ENCODE measurements at regions of chr3 and their contacts with region 1.

Region 1: GRCh38 chr3:52536369-52537164 is at the start of gene UQCC5:
- DNase-seq: peak; percentile 94 to 98
- H3K4me3 ChIP-seq: peak within 1 kb of the TSS; percentile 99
- H3K27ac ChIP-seq: peak within 1 kb of the TSS; percentile 71
- H3K4me1 ChIP-seq: peaks cover 28% of the 10 kb centered on the region
- H3K27me3 ChIP-seq: no peaks in the 10 kb centered on the region
- CTCF ChIP-seq: no peak
- total RNA-seq, gene UQCC5: 13.3 and 16.5 TPM in 2 replicates

Region 2: GRCh38 chr3:52455283-52456168 is 81.0 kb before region 1 on chr3 and contains the start of gene NISCH:
- CTCF ChIA-PET with region 1: no interaction called
- POLR2A ChIA-PET with region 1: interaction called, 30 read pairs
- intact Hi-C with region 1: no loop called
- DNase-seq: peak in 1 of 2 experiments; percentile 92
- H3K4me3 ChIP-seq: peak within 1 kb of the TSS; percentile 81
- H3K27ac ChIP-seq: no peak within 1 kb of the TSS
- H3K4me1 ChIP-seq: peaks cover 27% of the 10 kb centered on the region
- H3K27me3 ChIP-seq: no peaks in the 10 kb centered on the region
- CTCF ChIP-seq: no peak
- total RNA-seq, gene NISCH: 66.1 and 68.0 TPM in 2 replicates

Region 3: DNA sequence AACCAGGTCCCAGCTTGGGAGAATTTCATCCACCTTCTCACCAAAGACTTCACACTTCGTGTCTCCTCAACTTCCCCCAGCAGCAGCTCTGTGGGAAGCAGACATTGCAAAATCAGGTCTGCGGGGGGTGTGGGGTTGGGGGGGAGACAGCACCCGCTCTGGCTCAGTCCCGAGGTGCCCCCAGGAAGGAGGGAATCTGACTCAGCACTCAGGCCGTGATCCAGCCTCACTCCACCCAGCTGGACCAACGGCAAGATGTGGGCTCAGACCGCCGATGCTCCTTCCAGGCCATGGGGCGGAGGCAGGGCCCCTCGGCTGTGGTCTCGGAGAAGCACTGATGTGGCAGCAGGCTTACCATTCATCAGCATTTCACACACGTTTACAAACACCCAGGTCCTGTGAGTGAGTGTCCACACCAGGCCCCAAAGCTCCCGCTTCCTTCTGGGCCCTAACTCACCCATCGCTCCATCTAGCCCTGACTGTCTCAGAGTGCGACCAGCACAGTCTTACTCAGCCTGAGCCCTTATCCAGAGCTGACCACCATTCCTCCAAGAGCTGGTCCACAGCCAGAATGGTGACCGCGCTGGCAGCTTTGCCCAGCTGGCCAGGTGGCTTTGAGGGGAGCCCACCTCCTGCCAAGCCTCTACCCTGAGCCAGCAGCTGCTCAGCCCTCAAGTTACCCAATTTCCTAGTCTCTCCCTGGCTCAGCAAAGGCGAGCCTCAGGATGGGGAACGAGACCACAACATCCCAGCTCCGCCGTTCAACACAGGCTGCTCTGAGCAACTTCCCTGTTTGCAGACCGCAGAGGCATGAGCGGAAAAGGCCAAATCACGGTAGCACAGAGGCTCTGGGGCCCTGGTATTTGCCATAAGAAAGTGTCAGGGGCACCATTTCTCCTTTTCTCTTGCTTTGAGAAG is 38.2 kb before region 1 on chr3:
- CTCF ChIA-PET with region 1: no interaction called
- POLR2A ChIA-PET with region 1: interaction called, 22 read pairs
- intact Hi-C with region 1: no loop called
- DNase-seq: no peak
- H3K4me3 ChIP-seq: no peak overlapping the region
- H3K27ac ChIP-seq: no peak overlapping the region
- H3K4me1 ChIP-seq: no peaks in the 10 kb centered on the region
- H3K27me3 ChIP-seq: no peaks in the 10 kb centered on the region
- CTCF ChIP-seq: no peak

Region 4: DNA sequence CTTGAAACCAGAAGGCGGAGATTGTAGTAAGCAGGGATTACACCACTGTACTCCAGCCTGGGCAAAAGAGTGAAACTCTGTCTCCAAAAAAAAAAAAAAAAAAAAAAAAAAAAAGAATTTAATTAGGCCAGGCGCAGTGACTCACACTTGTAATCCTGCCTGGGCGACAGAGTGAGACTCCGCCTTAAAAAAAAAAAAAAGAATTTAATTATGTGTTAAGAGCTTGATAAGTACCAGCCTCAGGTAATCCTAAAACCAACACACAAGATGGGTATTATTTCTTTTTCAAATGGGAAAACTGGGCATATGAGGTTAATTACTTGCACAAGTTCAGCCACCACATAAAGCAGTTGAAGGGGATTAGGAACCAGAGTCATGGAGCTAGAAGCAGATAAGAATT is 100.1 kb after region 1 on chr3:
- CTCF ChIA-PET with region 1: no interaction called
- POLR2A ChIA-PET with region 1: interaction called, 11 read pairs
- intact Hi-C with region 1: no loop called
- DNase-seq: peak; percentile 35 to 81
- H3K4me3 ChIP-seq: no peak overlapping the region
- H3K27ac ChIP-seq: peak overlapping the region; percentile 53; the same call in 1 of the 2 replicates
- H3K4me1 ChIP-seq: peaks cover 10% of the 10 kb centered on the region; the same call in 1 of the 2 replicates
- H3K27me3 ChIP-seq: no peaks in the 10 kb centered on the region
- CTCF ChIP-seq: no peak

Measured in PC-9 (cell line).